Activated naive CD4-positive, alpha-beta T cell treated with anti-CD3 and anti-CD28 coated beads, Interleukin-2, amount 10 ng/mL, durations not matched to agents 7 days and 5 days (primary cell): ENCODE measurements at regions of chr4 and their contacts with region 1.

Region 1: DNA sequence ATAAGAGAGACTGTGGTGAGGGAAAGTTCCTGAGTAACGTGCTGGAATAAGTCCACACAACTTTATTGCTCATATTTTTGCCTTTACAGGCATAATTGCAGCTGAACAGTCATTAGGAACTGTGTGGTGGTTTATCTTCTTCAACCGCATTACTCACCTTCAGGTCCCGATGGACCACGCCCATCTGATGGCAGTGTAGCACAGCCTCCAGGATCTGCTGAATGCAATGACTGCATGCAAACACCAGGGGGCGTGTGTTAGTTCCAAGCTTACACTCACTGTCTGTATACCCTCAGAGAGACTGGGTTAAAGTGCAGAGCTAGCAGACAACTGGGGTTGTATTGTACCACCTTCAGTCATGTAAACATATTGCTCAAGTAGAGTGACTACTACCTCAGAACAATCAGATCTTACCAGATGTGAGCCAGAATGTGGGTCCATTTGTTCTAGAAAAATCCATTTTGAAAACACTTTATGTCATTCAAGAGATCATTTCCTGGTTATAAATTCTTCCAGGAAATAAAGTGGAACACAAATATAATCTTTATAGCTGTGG is 214.0 kb downstream of the CAMK2D start:
- DNase-seq: peak; percentile 94
- H3K4me3 Mint-ChIP-seq: no peak overlapping the region
- H3K27ac Mint-ChIP-seq: peak overlapping the region; percentile 30
- H3K4me1 Mint-ChIP-seq: peaks cover 15% of the 10 kb centered on the region
- H3K27me3 Mint-ChIP-seq: no peaks in the 10 kb centered on the region

Region 2: DNA sequence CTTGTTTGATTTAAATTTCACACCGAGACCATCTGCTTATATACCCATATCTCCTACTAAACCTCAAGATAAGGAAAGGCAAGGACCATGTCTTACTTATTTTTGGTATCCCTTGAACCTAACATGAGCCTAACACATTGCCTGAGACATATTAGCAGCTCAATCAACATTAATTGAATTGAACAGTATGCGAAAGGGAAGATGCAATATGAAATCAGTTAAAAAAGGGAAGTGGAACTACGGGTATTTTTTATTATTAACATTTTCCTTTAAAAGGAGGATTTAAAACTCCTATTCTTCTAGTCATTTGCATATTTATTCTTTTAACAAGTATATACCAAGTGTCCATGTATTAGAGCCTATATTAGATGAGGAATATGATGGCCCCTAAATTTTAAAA is 16.9 kb after region 1 on chr4:
- CTCF ChIA-PET with region 1: interaction called, 24 read pairs
- DNase-seq: no peak
- H3K4me3 Mint-ChIP-seq: no peak overlapping the region
- H3K27ac Mint-ChIP-seq: peak overlapping the region; percentile 81
- H3K4me1 Mint-ChIP-seq: peaks cover 36% of the 10 kb centered on the region
- H3K27me3 Mint-ChIP-seq: no peaks in the 10 kb centered on the region

Region 3: DNA sequence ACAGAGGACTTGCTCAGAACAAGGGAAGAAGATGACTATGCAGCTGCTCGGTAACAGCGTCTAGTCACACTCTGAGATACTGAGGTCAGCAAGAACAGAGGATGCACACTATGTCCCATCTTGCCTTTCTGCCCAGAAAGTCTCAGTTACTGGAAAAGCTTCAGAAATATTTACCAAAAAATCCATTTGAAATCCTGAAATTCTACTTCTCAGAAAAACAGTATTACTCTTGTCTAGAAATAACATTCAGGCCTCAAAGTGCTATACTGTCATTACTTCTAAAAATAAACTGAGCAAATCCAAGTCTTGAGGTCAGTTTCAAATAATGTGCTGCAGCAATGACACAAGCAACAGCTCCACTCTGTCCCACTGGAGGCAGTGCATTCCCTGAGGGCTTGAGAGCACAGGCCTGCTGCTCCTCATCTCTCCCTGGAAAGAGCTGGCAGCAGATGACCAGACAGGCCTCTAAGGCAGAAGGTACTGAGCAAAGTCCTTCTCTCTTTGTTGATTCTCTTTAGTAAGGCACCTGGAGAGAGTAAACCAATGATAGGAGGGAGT is 137.0 kb after region 1 on chr4:
- CTCF ChIA-PET with region 1: interaction called, 10 read pairs
- DNase-seq: no peak
- H3K4me3 Mint-ChIP-seq: no peak overlapping the region
- H3K27ac Mint-ChIP-seq: peak overlapping the region; percentile 91
- H3K4me1 Mint-ChIP-seq: peaks cover 62% of the 10 kb centered on the region
- H3K27me3 Mint-ChIP-seq: no peaks in the 10 kb centered on the region

Region 4: GRCh38 chr4:113708250-113708649 is 160.7 kb after region 1 on chr4:
- CTCF ChIA-PET with region 1: no interaction called
- DNase-seq: no peak
- H3K4me3 Mint-ChIP-seq: no peak overlapping the region
- H3K27ac Mint-ChIP-seq: no peak overlapping the region
- H3K4me1 Mint-ChIP-seq: peaks cover 2% of the 10 kb centered on the region
- H3K27me3 Mint-ChIP-seq: no peaks in the 10 kb centered on the region